Tibial artery (tissue), 4 donors: ENCODE measurements at regions of chr3 and their contacts with region 1.

Region 1: GRCh38 chr3:64928697-64929096 is 240.9 kb upstream of the ADAMTS9 start:
- DNase-seq: no peak
- H3K4me3 ChIP-seq: no peak overlapping the region
- H3K27ac ChIP-seq: no peak overlapping the region
- H3K4me1 ChIP-seq: peaks cover 0 to 10% (median 4%) of the 10 kb centered on the region in 4 donors
- H3K27me3 ChIP-seq: no peaks in the 10 kb centered on the region
- CTCF ChIP-seq: no peak

Region 2: GRCh38 chr3:64848822-64849221 is 79.9 kb before region 1 on chr3:
- intact Hi-C with region 1: loop called (anchors 10 kb)
- DNase-seq: no peak
- H3K4me3 ChIP-seq: no peak overlapping the region
- H3K27ac ChIP-seq: no peak overlapping the region
- H3K4me1 ChIP-seq: peaks cover 0 to 9% (median 0%) of the 10 kb centered on the region in 4 donors
- H3K27me3 ChIP-seq: no peaks in the 10 kb centered on the region
- CTCF ChIP-seq: no peak